ENCODE measurements at regions of chr15 and their contacts with region 1.

Region 1: GRCh38 chr15:60720493-60721256 is 241.7 kb upstream of the ICE2 start:
- DNase-seq: peak; percentile 56
- H3K4me3 Mint-ChIP-seq: peak overlapping the region; percentile 59
- H3K27ac Mint-ChIP-seq: peak overlapping the region; percentile 88
- H3K4me1 Mint-ChIP-seq: peaks cover 80% of the 10 kb centered on the region
- H3K27me3 Mint-ChIP-seq: no peaks in the 10 kb centered on the region

Region 2: DNA sequence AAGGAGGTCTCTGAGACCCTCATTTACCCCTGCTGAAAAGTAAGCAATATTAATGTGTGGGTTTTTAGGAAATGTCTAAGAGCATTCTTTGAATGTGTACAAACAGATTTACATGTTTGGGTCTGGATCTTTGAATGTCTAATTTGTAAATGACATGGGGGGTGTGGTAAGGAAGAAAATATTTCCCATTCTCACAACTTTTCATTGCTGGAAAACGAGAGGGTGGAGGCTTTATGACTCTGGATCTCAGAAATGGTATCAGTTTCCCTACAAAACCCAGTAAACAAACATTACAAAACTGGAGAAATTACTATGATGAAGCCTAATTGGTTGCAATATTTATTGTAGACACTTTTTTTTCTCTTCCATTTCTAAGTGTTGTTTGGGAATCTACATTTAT is 814.6 kb before region 1 on chr15:
- intact Hi-C with region 1: no loop called
- DNase-seq: no peak
- H3K4me3 Mint-ChIP-seq: no peak overlapping the region
- H3K27ac Mint-ChIP-seq: no peak overlapping the region
- H3K4me1 Mint-ChIP-seq: peaks cover 8% of the 10 kb centered on the region
- H3K27me3 Mint-ChIP-seq: peaks cover 48% of the 10 kb centered on the region

Region 3: DNA sequence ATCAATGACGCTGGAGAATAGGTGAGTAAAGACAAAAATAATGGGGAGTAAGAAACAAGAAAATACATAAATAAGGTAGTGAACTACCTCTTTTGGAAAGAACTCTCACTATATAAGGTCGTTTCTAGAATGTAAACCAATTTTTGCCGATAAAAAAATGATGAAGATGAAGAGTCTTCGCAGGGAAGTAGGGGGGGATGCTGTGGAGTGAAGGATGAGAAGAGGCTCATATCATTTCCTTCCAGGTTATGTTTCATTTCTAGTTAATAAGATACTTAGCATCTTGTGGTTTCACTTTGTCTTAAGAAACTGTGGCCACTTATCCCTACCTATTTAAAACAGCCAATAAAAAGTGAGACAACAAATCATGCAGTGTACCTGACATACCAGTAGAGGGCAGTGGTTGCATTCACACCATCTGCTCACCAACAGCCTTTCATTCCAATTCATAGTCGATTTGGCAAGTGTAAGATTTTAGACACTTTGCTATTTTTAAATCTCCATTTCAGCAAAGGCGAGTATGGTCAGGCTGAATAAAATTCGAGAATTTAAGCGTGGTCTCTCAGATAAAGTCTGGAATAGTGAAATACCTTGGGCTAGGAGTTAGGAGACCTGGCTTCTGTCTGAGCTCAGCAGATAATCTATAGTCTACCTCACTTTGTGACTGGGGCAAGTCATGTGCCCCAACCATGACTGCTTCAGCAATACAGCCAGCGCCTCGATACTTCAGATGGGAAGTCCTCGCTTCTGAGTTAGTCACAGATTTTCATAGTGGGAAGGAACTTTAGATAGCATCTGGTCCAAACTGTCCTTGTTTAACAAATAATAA is 212.9 kb before region 1 on chr15:
- intact Hi-C with region 1: loop called (anchors 5 kb)
- DNase-seq: peak; percentile 51
- H3K4me3 Mint-ChIP-seq: no peak overlapping the region
- H3K27ac Mint-ChIP-seq: peak overlapping the region; percentile 65
- H3K4me1 Mint-ChIP-seq: peaks cover 58% of the 10 kb centered on the region
- H3K27me3 Mint-ChIP-seq: no peaks in the 10 kb centered on the region

Region 4: DNA sequence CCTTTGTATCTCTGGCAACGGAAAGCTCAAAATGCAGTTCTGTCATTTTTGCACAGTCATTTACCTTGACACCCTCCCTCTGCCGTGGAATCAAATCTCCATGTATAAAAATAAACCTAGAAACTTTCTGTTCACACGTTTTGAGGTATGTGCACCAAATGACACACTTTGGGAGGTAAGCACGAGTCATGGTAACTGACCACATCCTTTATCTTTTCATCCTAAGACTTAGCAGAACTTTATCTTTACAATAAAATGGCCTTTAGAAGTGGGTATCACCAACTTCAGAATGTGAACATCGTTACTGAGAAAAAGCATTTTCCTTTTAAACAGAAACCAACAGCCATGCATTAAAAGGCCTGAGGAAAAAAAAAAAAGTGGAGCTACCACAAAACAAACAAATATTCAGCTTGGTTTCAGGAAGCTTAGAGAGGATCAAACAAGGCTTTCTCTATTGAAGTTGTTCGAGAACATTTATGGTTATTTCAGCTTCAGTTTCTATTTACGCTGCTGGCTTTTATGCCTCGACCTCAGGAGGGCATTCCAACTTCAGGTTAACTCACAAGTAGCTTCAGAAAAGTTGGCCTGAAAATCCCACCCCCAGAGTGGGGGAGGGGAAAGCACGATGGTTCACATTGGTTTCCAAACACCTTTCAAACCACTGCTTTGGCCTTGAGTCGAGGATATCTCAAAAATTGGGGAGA is 70.7 kb before region 1 on chr15:
- intact Hi-C with region 1: loop called (anchors 1 kb)
- DNase-seq: peak; percentile 46
- H3K4me3 Mint-ChIP-seq: peak overlapping the region; percentile 70
- H3K27ac Mint-ChIP-seq: peak overlapping the region; percentile 89
- H3K4me1 Mint-ChIP-seq: peaks cover 69% of the 10 kb centered on the region
- H3K27me3 Mint-ChIP-seq: peaks cover under 1% of the 10 kb centered on the region

Region 5: GRCh38 chr15:60695713-60696522 is 24.8 kb before region 1 on chr15:
- intact Hi-C with region 1: loop called (anchors 1 kb)
- DNase-seq: peak; percentile 48
- H3K4me3 Mint-ChIP-seq: peak overlapping the region; percentile 32
- H3K27ac Mint-ChIP-seq: peak overlapping the region; percentile 75
- H3K4me1 Mint-ChIP-seq: peaks cover 66% of the 10 kb centered on the region
- H3K27me3 Mint-ChIP-seq: no peaks in the 10 kb centered on the region

Region 6: GRCh38 chr15:60760646-60761504 is 40.2 kb after region 1 on chr15:
- intact Hi-C with region 1: loop called (anchors 1 kb)
- DNase-seq: no peak
- H3K4me3 Mint-ChIP-seq: no peak overlapping the region
- H3K27ac Mint-ChIP-seq: peak overlapping the region; percentile 41
- H3K4me1 Mint-ChIP-seq: peaks cover 26% of the 10 kb centered on the region
- H3K27me3 Mint-ChIP-seq: peaks cover 2% of the 10 kb centered on the region

Region 7: DNA sequence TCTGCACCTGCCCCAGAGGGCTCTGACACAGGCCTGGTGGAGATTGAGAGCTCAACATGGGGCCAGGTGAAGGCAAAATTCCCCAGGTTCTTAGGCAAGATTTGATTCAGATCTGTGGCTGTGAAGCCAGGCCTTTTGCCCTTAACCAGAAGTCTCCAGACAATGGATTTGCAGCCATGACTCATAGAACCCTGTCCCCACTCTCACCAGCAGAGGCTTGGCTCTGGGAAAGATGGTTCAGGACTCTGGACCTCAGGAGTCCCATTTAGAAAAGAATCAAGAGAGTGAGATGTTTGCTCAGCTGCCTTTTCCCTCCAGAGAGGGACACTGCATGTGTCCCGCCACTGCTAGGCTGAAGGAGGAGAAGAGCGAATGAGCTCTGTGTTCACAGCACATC is 119.6 kb after region 1 on chr15:
- intact Hi-C with region 1: loop called (anchors 1 kb)
- DNase-seq: no peak
- H3K4me3 Mint-ChIP-seq: peak overlapping the region; percentile 49
- H3K27ac Mint-ChIP-seq: peak overlapping the region; percentile 37
- H3K4me1 Mint-ChIP-seq: peaks cover 66% of the 10 kb centered on the region
- H3K27me3 Mint-ChIP-seq: peaks cover 17% of the 10 kb centered on the region

Measured in activated T-helper 1 cell treated with anti-CD3 and anti-CD28 coated beads, Interleukin-12 subunit alpha, Interleukin-12 subunit beta, Interleukin-2, Interleukin-4 antibody, amounts not matched to agents 30 ng/mL and 10 ng/mL and 1 ng/mL, durations not matched to agents 14 hours and 24 hours and 36 hours (primary cell).